ENCODE measurements at regions of chr1 and their contacts with region 1.

Region 1: GRCh38 chr1:180482425-180483275 is 19.7 kb downstream of the ACBD6 start:
- DNase-seq: peak; percentile 19
- H3K4me3 ChIP-seq: no peak overlapping the region
- H3K27ac ChIP-seq: no peak overlapping the region
- H3K4me1 ChIP-seq: no peaks in the 10 kb centered on the region
- H3K27me3 ChIP-seq: no peaks in the 10 kb centered on the region
- CTCF ChIP-seq: peak in 3 of 4 experiments; percentile 58 to 66 (median 66)
- POLR2A ChIP-seq: no peak

Region 2: DNA sequence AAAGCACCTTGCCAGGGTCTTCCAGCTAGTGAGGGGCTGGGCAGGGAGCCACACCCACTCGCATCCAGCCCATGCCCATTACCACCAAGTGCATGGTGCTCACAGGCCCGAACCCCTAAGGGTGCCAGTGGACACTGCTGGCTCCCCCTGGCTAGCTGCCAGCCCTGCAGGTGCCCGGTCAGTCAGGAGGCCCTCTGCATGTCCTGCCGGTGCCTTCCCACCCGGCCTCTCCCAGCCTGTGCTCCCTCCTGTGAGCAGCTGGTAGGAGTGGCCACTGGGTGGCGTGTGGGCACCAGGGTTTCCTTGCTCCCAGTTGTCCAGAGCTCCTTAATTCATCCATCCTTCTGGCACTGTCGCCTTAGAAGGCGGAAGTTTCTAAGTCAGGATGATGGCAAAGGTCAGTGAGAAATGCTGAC is 294.6 kb before region 1 on chr1:
- intact Hi-C with region 1: loop called (anchors 5 kb)
- DNase-seq: peak; percentile 45
- H3K4me3 ChIP-seq: no peak overlapping the region
- H3K27ac ChIP-seq: no peak overlapping the region
- H3K4me1 ChIP-seq: no peaks in the 10 kb centered on the region
- H3K27me3 ChIP-seq: no peaks in the 10 kb centered on the region
- CTCF ChIP-seq: peak in 3 of 4 experiments; percentile 44 to 61 (median 59)
- POLR2A ChIP-seq: no peak

Region 3: GRCh38 chr1:180252638-180253536 is 229.8 kb before region 1 on chr1:
- intact Hi-C with region 1: loop called (anchors 5 kb)
- DNase-seq: peak; percentile 31
- H3K4me3 ChIP-seq: no peak overlapping the region
- H3K27ac ChIP-seq: no peak overlapping the region
- H3K4me1 ChIP-seq: no peaks in the 10 kb centered on the region
- H3K27me3 ChIP-seq: no peaks in the 10 kb centered on the region
- CTCF ChIP-seq: peak in 3 of 4 experiments; percentile 47 to 64 (median 49)
- POLR2A ChIP-seq: no peak

Region 4: GRCh38 chr1:180805316-180805715 is 322.7 kb after region 1 on chr1:
- intact Hi-C with region 1: no loop called
- DNase-seq: no peak
- H3K4me3 ChIP-seq: no peak overlapping the region
- H3K27ac ChIP-seq: no peak overlapping the region
- H3K4me1 ChIP-seq: no peaks in the 10 kb centered on the region
- H3K27me3 ChIP-seq: no peaks in the 10 kb centered on the region
- CTCF ChIP-seq: no peak
- POLR2A ChIP-seq: no peak